ENCODE measurements at regions of chr13 and their contacts with region 1.

Region 1: DNA sequence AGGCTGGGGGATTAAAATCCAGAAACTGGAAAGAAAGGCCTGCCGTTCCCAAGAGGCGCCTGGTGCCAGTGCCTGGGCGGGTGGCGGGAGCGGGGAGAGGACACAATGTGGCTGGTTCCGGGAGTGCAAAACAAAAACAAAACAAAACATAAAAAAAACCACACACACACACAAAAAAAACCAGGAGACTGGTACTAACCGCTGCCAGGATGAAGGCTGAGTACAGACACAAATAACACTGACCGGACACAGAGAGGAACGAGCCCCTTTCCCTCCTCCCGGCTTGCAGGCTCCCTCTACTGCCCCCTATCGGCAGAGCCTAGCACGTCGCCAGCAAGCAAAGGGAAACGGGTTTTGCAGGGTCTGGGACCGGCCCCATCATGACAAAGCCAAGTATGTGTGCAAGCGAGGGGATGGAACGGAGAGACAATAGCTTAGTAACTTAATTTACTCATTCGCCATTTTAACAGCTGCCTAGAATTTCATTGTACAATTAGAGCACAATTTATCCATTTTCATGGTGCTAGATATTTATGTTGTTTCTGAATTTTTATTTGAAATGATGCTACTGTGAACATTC is 17.9 kb upstream of the ZDHHC20 start:
- DNase-seq: peak; percentile 73
- H3K4me3 Mint-ChIP-seq: peak overlapping the region; percentile 67
- H3K27ac Mint-ChIP-seq: no peak overlapping the region
- H3K4me1 Mint-ChIP-seq: peaks cover 16% of the 10 kb centered on the region
- H3K27me3 Mint-ChIP-seq: peaks cover 8% of the 10 kb centered on the region

Region 2: DNA sequence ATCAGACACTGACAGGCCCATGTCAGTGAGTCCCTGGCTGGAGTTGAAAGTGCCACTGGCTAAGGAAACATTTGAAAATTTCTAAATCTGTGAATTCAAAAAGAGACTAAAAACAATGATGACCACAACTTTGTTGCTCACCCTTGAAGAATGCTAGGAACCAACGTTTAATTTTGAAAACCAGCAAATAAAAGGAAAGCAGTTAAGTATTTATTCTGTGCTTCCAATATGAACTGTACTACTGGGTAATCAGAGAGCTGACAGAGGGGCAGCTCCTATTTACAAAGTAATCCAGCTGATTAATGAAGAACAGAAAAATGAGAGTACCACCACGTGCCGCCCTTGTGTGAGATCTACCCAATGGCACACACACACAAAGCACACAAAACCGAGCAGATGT is 370.9 kb before region 1 on chr13:
- intact Hi-C with region 1: loop called (anchors 1 kb)
- DNase-seq: no peak
- H3K4me3 Mint-ChIP-seq: no peak overlapping the region
- H3K27ac Mint-ChIP-seq: no peak overlapping the region
- H3K4me1 Mint-ChIP-seq: no peaks in the 10 kb centered on the region
- H3K27me3 Mint-ChIP-seq: peaks cover 3% of the 10 kb centered on the region

Region 3: DNA sequence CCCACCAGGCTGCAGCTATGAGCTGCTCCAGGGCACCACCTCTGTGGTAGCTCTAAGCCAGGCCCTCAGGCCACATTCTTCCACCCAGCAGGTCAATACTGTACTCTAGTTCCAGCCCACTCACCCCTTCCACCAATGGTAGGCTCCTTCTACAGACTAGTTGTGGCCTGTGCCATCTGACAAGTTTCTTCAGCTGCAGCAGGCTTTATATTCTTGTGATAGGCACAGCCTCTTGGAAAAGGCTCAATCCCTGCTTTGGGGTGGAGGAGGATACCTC is 118.5 kb after region 1 on chr13:
- intact Hi-C with region 1: no loop called
- DNase-seq: no peak
- H3K4me3 Mint-ChIP-seq: no peak overlapping the region
- H3K27ac Mint-ChIP-seq: no peak overlapping the region
- H3K4me1 Mint-ChIP-seq: peaks cover 6% of the 10 kb centered on the region
- H3K27me3 Mint-ChIP-seq: no peaks in the 10 kb centered on the region

Region 4: GRCh38 chr13:21735701-21736401 is 258.9 kb after region 1 on chr13:
- intact Hi-C with region 1: no loop called
- DNase-seq: no peak
- H3K4me3 Mint-ChIP-seq: no peak overlapping the region
- H3K27ac Mint-ChIP-seq: no peak overlapping the region
- H3K4me1 Mint-ChIP-seq: no peaks in the 10 kb centered on the region
- H3K27me3 Mint-ChIP-seq: peaks cover 9% of the 10 kb centered on the region

Region 5: GRCh38 chr13:21812192-21812626 is 335.2 kb after region 1 on chr13:
- intact Hi-C with region 1: no loop called
- DNase-seq: no peak
- H3K4me3 Mint-ChIP-seq: no peak overlapping the region
- H3K27ac Mint-ChIP-seq: no peak overlapping the region
- H3K4me1 Mint-ChIP-seq: no peaks in the 10 kb centered on the region
- H3K27me3 Mint-ChIP-seq: no peaks in the 10 kb centered on the region

Region 6: DNA sequence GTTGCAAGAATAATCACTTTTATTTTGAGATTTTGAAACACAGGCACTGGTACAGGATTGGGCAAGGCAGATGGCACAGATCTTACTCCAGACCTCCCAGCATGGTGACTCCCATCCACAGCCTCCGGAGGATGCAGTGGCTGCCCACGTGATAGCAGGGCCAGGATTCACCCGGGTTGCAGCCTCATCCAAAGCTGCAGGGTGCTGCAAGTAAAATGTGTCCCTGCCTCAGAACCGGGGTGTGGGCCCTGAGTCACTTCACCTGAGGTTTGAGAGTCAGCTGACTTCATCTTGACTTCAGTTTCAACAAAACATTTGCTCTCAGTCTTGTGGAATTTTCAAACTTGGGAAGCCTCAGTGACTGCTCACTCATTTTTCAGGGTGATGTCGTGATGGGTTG is 395.8 kb after region 1 on chr13:
- intact Hi-C with region 1: no loop called
- DNase-seq: no peak
- H3K4me3 Mint-ChIP-seq: no peak overlapping the region
- H3K27ac Mint-ChIP-seq: no peak overlapping the region
- H3K4me1 Mint-ChIP-seq: no peaks in the 10 kb centered on the region
- H3K27me3 Mint-ChIP-seq: peaks cover 3% of the 10 kb centered on the region